ENCODE measurements at regions of chr5 and their contacts with region 1.

Region 1: GRCh38 chr5:151252762-151253604 is at the start of gene GM2A:
- DNase-seq: peak; percentile 90 to 99 (median 96)
- ATAC-seq: peak; percentile 95 to 99
- H3K4me3 Mint-ChIP-seq: peak within 1 kb of the TSS; percentile 75 to 95 (median 95)
- H3K27ac Mint-ChIP-seq: peak within 1 kb of the TSS; percentile 75 to 98 (median 92)
- H3K4me1 Mint-ChIP-seq: peaks cover 24 to 68% (median 45%) of the 10 kb centered on the region in 4 donors
- H3K27me3 Mint-ChIP-seq: no peaks in the 10 kb centered on the region
- polyA plus RNA-seq, gene GM2A: 3.8 to 6.5 (median 5.6) TPM

Region 2: DNA sequence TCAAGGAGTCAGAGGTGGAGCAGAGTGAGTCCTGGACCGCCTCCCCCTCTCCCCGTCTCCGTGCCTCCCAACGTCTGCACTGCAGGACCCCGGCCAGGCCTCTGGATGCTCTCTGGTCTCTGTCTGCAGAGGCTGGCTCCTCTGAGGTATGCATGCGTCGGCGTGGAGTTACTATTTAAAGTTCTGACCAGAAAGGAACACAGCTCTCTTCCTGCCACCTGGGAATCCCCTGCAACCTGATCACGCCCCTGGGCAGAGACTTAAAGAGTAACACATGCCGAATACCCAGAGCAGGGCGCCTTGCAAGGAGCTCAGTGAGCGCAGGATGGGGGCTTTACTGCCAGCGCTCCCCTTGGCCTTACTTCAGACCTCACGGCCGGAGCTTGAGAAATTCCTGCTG is 111.4 kb before region 1 on chr5:
- POLR2A ChIA-PET with region 1: interaction called, 10 read pairs
- DNase-seq: peak; percentile 37 to 80 (median 55)
- ATAC-seq: peak; percentile 80 to 81
- H3K4me3 Mint-ChIP-seq: peak overlapping the region; percentile 80 to 94 (median 92)
- H3K27ac Mint-ChIP-seq: peak overlapping the region; percentile 91 to 99 (median 95)
- H3K4me1 Mint-ChIP-seq: peaks cover 67 to 99% (median 98%) of the 10 kb centered on the region in 4 donors
- H3K27me3 Mint-ChIP-seq: no peaks in the 10 kb centered on the region

Region 3: DNA sequence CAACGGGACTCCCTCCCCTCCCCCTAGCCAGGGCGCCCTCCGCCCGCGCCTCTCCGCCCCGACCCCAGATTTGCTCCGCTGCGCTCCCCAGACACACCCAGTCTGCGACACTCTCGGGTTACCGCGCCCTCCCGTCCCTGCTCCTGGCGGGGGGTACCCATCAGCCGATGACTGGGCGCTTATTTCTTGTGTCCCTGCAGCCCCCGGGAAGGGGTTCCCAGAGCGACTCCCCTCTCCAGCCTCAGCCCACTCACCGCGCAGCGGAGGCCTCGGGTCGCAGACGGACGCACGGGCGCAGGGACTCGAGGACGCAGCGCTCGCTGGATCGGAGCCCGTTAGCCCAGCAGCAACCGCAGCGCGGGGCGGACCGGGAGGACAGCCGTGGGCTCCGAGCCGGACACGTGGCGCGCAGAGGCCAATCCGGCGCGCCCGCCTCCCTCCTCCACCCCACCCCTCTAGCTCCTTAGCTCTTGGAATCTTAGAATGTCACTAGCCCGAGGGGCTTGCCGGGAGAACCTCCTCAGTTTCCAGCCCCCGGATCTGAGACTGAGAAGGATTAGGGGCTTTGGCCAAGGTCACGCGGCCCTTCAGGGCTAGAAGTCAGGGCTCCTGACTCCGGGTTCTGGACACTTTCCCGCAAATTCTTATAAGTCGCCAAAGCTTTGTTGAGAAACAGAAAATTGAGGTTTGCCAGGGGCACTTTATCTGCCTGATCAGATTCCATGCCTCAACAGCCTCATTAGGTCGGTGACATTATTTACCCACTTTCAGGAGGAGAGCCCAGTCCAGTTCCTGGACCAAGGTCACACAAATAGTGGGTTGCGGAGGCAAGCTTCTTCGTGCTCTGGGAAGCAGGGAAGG is 95.3 kb before region 1 on chr5 and contains the start of gene ANXA6:
- POLR2A ChIA-PET with region 1: interaction called, 12 read pairs
- DNase-seq: peak; percentile 24 to 76 (median 60)
- ATAC-seq: peak; percentile 75 to 76
- H3K4me3 Mint-ChIP-seq: peak within 1 kb of the TSS; percentile 93 to 99 (median 95)
- H3K27ac Mint-ChIP-seq: peak within 1 kb of the TSS; percentile 94 to 99 (median 96)
- H3K4me1 Mint-ChIP-seq: peaks cover 38 to 69% (median 60%) of the 10 kb centered on the region in 4 donors
- H3K27me3 Mint-ChIP-seq: no peaks in the 10 kb centered on the region
- polyA plus RNA-seq, gene ANXA6: 242 to 318 (median 254) TPM

Region 4: DNA sequence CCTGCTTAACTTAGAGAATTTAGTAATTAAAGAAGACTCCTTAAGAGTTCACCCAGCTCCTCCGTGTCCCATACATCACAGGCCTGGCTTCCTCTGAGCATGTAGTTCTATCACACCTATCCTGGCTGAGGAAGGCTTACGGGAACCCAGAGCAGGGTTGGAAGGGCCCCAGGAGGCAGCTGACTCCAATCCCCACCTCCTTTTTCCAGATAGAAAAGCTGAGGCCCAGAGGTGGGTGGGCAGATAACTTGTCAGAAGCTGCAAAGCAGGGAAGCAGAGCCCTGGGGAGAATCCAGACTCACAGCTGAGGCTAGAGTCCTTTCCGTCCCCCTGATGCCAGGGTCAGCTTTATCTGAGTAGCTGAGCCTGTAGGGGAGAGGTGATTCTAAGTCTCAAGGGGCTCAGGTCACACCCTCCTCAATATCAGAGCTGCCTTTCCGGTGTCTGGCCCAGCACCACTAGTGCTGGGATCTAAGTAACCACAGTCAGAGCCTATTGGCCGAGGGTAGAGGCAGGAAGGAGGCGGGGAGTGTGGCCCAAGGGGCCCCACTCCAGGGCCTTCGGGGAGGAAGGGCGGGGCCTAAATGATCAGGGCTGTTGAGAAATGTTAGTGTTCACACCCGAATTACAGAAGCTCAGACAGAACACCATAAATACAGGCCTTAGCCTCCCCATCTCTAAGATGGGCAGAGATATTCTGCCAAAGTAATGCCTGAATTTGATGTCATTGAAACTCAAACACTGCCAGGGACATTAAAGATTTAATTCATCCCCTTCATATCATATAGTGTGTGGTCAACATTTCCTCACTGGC is 39.0 kb before region 1 on chr5:
- POLR2A ChIA-PET with region 1: interaction called, 38 read pairs
- DNase-seq: peak; percentile 60 to 93 (median 81)
- ATAC-seq: peak; percentile 74 to 78
- H3K4me3 Mint-ChIP-seq: peak overlapping the region; percentile 80 to 96 (median 89)
- H3K27ac Mint-ChIP-seq: peak overlapping the region; percentile 93 to 100 (median 98)
- H3K4me1 Mint-ChIP-seq: peaks cover 40 to 95% (median 85%) of the 10 kb centered on the region in 4 donors
- H3K27me3 Mint-ChIP-seq: no peaks in the 10 kb centered on the region

Region 5: GRCh38 chr5:151239237-151239861 is 13.6 kb before region 1 on chr5:
- POLR2A ChIA-PET with region 1: interaction called, 21 read pairs
- DNase-seq: peak in 6 of 10 donors; percentile 27 to 72 (median 56)
- ATAC-seq: peak; percentile 50 to 58
- H3K4me3 Mint-ChIP-seq: peak overlapping the region in 9 of 10 donors; percentile 30 to 82 (median 63)
- H3K27ac Mint-ChIP-seq: peak overlapping the region in 6 of 10 donors; percentile 11 to 84 (median 67)
- H3K4me1 Mint-ChIP-seq: peaks cover 20 to 57% (median 44%) of the 10 kb centered on the region in 4 donors
- H3K27me3 Mint-ChIP-seq: no peaks in the 10 kb centered on the region

Region 6: DNA sequence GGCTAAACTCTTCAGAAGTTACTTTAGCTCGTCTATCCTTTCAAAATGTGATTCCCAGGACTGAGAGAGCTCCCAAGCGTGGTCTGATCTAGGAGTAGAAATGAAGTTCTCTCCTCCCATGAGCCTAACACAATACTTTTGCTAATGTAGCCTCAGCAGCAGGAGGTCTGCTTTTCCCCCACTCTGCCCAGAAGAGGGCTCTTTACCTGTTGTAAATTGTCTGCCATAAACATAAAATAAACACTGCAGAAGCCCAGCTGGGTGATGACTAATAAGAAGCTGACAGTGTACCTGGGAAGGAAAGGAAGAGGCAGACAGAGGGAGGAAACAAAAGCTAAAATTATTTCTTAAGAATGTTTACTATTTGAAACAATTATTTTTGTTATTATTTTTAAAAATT is 35.2 kb after region 1 on chr5:
- POLR2A ChIA-PET with region 1: no interaction called
- DNase-seq: no peak
- ATAC-seq: no peak
- H3K4me3 Mint-ChIP-seq: no peak overlapping the region
- H3K27ac Mint-ChIP-seq: no peak overlapping the region
- H3K4me1 Mint-ChIP-seq: peaks cover 0 to 2% (median 0%) of the 10 kb centered on the region in 4 donors
- H3K27me3 Mint-ChIP-seq: peaks cover 0 to under 1% (median 0%) of the 10 kb centered on the region in 5 donors

Region 7: GRCh38 chr5:151338734-151339133 is 85.8 kb after region 1 on chr5:
- POLR2A ChIA-PET with region 1: no interaction called
- DNase-seq: peak in 2 of 10 donors; percentile 1 to 6
- ATAC-seq: peak in 1 of 2 donors; percentile 56
- H3K4me3 Mint-ChIP-seq: no peak overlapping the region
- H3K27ac Mint-ChIP-seq: peak overlapping the region in 1 of 10 donors; percentile 33
- H3K4me1 Mint-ChIP-seq: peaks cover 0 to 11% (median under 1%) of the 10 kb centered on the region in 4 donors
- H3K27me3 Mint-ChIP-seq: peaks cover 21 to 38% (median 29%) of the 10 kb centered on the region in 5 donors

Region 8: DNA sequence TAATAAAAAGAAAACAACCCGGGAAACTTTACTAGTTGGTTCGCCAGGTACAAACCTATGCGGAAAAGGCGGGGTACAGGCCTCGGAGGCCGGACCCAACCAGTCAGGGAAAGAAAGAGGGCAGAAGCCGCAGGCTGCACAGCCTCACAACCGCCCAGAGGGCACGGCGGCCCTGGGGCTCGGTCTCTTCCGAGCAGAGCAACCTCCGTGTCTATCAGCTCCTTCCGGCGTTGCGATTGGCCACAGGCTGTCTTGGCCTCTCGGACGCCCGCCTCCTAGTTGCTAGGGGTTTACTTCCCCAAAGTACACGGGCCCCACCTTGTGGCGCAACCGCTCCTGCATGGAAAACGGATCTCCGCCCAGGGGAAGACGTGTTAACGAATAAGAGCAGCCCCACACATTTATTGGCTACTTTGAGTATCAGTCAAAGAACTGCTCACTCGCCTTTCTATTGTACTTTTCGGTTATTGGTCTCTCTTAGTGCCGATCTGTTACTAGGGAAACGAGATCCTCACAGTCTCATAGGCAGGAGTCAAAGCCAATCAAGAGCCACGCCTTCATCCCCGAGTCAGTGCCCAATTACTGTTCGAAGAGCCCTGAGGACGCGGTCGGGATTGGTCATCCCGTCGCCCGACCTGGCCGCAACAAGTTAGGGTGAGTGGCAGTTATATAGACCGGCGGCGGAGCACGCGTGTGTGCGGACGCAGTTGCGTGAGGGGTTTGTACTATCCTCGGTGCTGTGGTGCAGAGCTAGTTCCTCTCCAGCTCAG is 518.5 kb after region 1 on chr5 and contains the start of gene G3BP1:
- POLR2A ChIA-PET with region 1: interaction called, 11 read pairs
- DNase-seq: peak; percentile 92 to 100 (median 99)
- ATAC-seq: peak; percentile 77 to 79
- H3K4me3 Mint-ChIP-seq: peak within 1 kb of the TSS in 9 of 10 donors; percentile 83 to 98 (median 91)
- H3K27ac Mint-ChIP-seq: peak within 1 kb of the TSS in 8 of 10 donors; percentile 54 to 95 (median 92)
- H3K4me1 Mint-ChIP-seq: peaks cover 20 to 46% (median 45%) of the 10 kb centered on the region in 4 donors
- H3K27me3 Mint-ChIP-seq: no peaks in the 10 kb centered on the region
- polyA plus RNA-seq, gene G3BP1: 128 to 145 (median 145) TPM